ENCODE measurements at regions of chr15 and their contacts with region 1.

Region 1: GRCh38 chr15:65286704-65287519 is at the start of gene PARP16:
- DNase-seq: peak; percentile 94
- H3K4me3 ChIP-seq: peak within 1 kb of the TSS; percentile 79
- H3K27ac ChIP-seq: peak within 1 kb of the TSS; percentile 43
- H3K4me1 ChIP-seq: peaks cover 27% of the 10 kb centered on the region
- CTCF ChIP-seq: peak; percentile 43
- total RNA-seq, gene PARP16: 10.8 and 21.2 TPM in 2 replicates

Region 2: DNA sequence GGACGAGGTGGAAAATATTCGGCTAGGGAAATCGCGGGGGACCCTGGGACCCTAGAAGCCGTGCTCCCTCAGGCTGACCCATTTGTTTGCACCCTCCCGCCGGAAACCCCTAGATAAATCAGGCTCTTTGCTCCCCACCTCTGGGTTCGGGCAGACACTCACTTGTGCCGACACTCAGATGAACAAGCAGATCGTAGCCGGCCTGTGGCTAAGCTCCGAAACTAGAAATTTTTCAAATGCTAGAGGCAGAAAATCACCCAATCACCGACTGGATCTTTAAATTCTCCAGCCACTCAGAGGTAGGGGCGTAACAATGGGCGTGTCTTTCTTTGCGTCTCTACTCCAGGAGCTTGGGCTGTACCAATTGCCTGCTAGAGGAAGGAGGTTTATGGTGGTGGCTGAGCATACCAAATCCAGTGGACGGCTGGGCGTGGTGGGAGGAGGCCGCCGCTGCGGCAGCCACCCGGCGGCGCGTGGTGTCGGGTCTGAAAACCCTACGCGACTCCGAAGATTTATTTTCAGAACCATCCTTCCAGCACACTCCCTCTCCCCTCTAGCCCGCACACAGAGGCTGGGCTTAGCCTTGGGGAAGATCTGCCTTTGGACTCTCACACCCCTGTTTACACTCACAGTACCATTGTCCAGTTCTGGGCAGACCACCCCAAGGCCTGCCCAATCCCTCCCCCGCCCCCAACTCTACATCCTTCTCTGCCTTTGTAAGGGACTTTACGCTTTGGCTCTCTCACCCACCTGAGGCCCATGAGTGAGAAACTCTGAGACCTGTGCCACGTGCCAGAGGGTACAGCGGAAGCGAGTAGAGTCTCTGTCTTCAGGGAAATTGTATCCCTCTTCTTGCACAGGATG is 461.2 kb before region 1 on chr15 and contains the start of gene PIF1:
- CTCF ChIA-PET with region 1: no interaction called
- POLR2A ChIA-PET with region 1: no interaction called
- intact Hi-C with region 1: loop called (anchors 10 kb)
- DNase-seq: peak; percentile 100
- H3K4me3 ChIP-seq: peak within 1 kb of the TSS; percentile 95
- H3K27ac ChIP-seq: peak within 1 kb of the TSS; percentile 87
- H3K4me1 ChIP-seq: peaks cover 35% of the 10 kb centered on the region
- CTCF ChIP-seq: 0 out of 2 replicates have a peak, but pooled peaks have one; percentile 10
- total RNA-seq, gene PIF1: 78.0 and 82.9 TPM in 2 replicates

Region 3: DNA sequence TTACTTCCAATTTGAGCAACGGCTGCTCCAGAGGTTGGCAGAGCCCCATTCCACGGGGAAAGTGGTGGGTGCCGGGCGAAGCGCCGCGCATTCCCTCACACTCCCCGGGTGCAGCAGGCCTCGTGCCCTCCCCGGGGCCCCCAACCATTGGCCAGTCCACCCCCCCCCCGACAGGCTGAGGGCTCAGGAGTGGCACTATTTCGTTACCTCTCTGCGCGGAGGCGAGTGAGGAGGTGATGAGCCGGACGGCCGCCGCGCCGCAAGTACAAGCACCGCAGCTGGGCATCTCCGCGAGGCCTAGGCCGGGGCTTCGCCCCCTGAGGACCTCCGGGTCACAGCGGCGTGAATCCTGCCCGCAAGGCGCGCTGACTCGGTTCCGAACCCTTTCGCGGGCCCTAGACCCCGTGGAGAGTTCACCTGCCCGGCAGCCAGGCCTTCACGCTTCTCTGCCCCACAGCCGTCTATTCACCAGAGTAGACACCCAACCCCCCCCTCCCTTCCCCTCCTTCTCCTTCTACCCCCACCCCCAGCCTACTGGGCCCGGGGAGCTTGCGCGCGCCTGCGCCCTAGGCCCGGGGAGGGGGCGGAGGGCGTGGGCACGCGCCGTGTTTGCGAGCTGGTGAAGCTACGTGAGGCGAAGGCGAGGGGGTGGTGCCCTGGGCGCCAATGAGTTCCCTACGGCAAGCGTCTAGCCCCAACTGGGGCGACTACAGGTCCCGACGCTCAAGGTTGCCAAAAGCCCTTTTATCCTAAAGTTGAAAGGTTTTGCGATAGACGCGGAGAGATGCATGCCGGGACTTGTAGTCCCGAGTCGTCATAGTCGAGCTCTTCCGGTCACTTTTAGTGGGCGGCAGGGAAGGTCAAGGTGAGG is 101.8 kb before region 1 on chr15 and contains the start of gene CLPX:
- CTCF ChIA-PET with region 1: interaction called, 11 read pairs
- POLR2A ChIA-PET with region 1: interaction called, 6 read pairs
- intact Hi-C with region 1: loop called (anchors 2 kb)
- DNase-seq: peak; percentile 92
- H3K4me3 ChIP-seq: peak within 1 kb of the TSS; percentile 94
- H3K27ac ChIP-seq: peak within 1 kb of the TSS; percentile 65
- H3K4me1 ChIP-seq: peaks cover 27% of the 10 kb centered on the region
- CTCF ChIP-seq: no peak
- total RNA-seq, gene CLPX: 26.0 and 34.0 TPM in 2 replicates

Region 4: GRCh38 chr15:65304389-65305144 is 17.7 kb after region 1 on chr15 and contains the start of gene RNU5B-1:
- CTCF ChIA-PET with region 1: no interaction called
- POLR2A ChIA-PET with region 1: interaction called, 29 read pairs
- intact Hi-C with region 1: no loop called
- DNase-seq: peak; percentile 96
- H3K4me3 ChIP-seq: peak within 1 kb of the TSS; percentile 69
- H3K27ac ChIP-seq: peak within 1 kb of the TSS; percentile 91
- H3K4me1 ChIP-seq: peaks cover 24% of the 10 kb centered on the region
- CTCF ChIP-seq: peak; percentile 99
- total RNA-seq, gene RNU5B-1: not detected in 2 replicates

Region 5: DNA sequence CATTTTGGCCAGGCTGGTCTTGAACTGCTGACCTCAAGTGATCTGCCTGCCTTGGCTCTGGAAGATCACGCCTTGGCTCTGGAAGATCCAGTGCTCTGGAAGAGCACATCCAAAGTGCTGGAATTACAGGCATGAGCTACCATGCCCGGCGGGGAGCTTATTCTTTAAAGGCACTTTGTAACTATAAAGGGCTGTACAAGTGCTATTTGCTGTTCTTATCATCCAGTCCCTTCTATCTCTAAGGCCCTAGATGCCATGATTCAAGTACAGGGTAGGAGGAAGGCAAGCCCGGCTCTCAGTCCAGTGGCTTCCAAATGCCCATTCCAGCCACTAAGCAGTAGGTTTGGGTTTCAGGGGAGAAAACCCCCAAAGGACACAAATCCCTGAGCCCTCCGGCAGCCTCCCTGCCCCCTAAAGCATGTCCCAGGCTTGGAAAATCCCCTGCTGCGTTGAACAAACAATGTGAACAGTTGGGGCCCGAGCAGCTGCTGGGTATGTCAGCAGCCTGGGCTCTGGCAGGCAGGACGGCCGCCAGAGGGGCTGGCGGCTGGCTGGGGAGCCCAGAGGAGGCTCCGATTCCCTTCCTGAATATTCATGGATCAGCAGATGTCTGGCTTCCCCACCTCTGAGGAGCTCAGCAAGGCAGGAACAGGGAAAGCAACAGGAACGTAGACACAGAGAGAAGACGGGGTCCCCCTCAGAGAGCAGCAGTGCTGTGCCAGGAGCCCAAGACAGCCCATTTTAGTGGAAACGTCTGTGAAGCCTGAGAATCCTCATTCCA is 128.1 kb after region 1 on chr15:
- CTCF ChIA-PET with region 1: no interaction called
- POLR2A ChIA-PET with region 1: no interaction called
- intact Hi-C with region 1: no loop called
- DNase-seq: no peak
- H3K4me3 ChIP-seq: no peak overlapping the region
- H3K27ac ChIP-seq: no peak overlapping the region
- H3K4me1 ChIP-seq: no peaks in the 10 kb centered on the region
- CTCF ChIP-seq: no peak

Region 6: GRCh38 chr15:66115568-66116206 is 828.8 kb after region 1 on chr15:
- CTCF ChIA-PET with region 1: interaction called, 16 read pairs
- POLR2A ChIA-PET with region 1: no interaction called
- intact Hi-C with region 1: no loop called
- DNase-seq: peak; percentile 57
- H3K4me3 ChIP-seq: no peak overlapping the region
- H3K27ac ChIP-seq: no peak overlapping the region
- H3K4me1 ChIP-seq: peaks cover 33% of the 10 kb centered on the region
- CTCF ChIP-seq: peak; percentile 56; the same call in 1 of the 2 replicates